Vagina (tissue), 2 donors: ENCODE measurements at regions of chr21 and their contacts with region 1.

Region 1: GRCh38 chr21:29372063-29372802 is 73.5 kb downstream of the BACH1 start:
- DNase-seq: peak; percentile 61 to 77
- H3K4me3 ChIP-seq: no peak overlapping the region
- H3K27ac ChIP-seq: no peak overlapping the region
- H3K4me1 ChIP-seq: no peaks in the 10 kb centered on the region
- H3K27me3 ChIP-seq: no peaks in the 10 kb centered on the region
- CTCF ChIP-seq: peak; percentile 61 to 90 (median 90)
- POLR2A ChIP-seq: no peak

Region 2: GRCh38 chr21:29091032-29091431 is 281.2 kb before region 1 on chr21:
- intact Hi-C with region 1: loop called (anchors 5 kb)
- DNase-seq: no peak
- H3K4me3 ChIP-seq: no peak overlapping the region
- H3K27ac ChIP-seq: peak overlapping the region; percentile 45
- H3K4me1 ChIP-seq: peaks cover 15% of the 10 kb centered on the region
- H3K27me3 ChIP-seq: no peaks in the 10 kb centered on the region
- CTCF ChIP-seq: no peak
- POLR2A ChIP-seq: no peak

Region 3: DNA sequence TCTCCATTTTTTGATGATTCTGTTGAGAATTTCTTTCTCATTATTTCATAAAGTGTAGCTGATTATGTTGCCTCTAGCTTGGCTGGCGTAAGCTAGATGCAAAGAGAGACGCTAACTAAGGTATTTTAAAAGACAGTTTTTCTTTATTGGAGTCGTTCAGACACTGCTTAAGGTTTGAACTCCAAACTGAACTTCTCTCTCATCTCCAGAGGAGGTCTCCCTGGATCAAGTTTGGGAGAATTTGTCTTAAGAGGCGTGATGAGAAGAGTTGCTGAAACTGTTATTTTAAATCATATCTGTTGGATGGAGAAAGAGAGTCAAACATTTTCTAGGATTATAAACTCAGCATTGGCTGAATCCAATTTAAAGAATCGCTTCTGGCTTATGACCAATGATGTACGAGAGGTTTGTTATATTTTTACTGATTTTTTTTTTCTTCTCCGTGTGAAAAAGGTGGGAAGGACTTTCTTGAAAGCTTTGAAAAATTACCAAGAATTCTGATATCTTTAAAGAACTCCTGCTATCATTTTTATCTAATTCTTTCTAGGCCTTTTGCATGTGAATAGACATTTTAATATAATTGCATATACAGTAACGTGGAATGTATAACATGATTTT is 207.8 kb before region 1 on chr21:
- intact Hi-C with region 1: loop called (anchors 10 kb)
- DNase-seq: no peak
- H3K4me3 ChIP-seq: no peak overlapping the region
- H3K27ac ChIP-seq: no peak overlapping the region
- H3K4me1 ChIP-seq: peaks cover 13% of the 10 kb centered on the region
- H3K27me3 ChIP-seq: no peaks in the 10 kb centered on the region
- CTCF ChIP-seq: peak; percentile 20 to 72 (median 64)
- POLR2A ChIP-seq: no peak